Psoas muscle (tissue), 8 donors: ENCODE measurements at regions of chrX and their contacts with region 1.

Region 1: DNA sequence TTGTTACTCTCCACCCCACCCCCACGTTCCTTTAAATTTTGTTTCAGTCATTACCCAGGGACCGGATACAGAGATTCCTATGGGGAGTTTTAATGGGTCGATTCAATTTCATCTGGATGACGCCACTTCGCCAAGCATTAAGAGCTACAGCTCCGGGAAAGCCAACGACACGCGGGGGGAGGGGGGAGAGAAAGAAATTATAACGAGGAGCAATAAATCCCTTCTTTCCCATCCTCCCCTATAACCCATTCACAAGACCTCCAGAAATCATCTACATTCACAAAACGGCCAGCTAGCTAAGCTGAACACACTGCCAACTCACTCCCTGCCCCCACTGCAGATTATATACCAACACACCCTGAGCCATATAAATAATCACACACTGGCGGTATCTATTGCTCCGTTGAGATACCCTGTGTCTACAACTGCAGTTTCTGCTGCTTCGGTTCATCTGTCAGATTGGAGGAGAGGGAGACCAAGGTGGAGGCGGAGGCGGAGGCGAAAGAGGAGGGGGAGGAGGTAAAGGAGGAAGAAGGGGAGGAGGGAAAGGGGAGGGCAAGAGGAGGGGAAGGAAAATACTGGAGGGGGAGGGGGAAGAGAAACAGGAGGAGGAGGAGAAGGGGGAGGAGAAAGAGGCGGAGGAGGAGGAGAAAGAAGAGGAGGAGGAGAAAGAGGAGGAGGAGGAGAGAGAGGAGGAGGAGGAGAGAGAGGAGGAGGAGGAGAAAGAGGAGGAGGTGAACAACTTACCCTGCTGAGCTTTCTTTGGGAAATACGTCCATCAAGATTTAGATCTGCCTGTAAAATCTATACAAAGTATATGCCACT is 113.9 kb upstream of the VAMP7 start:
- DNase-seq: peak; percentile 21 to 52
- ATAC-seq: peak; percentile 75 to 90 (median 86)
- H3K4me3 ChIP-seq: peak overlapping the region; percentile 64
- H3K27ac ChIP-seq: peak overlapping the region; percentile 72
- H3K4me1 ChIP-seq: no peaks in the 10 kb centered on the region
- H3K27me3 ChIP-seq: no peaks in the 10 kb centered on the region
- CTCF ChIP-seq: no peak

Region 2: DNA sequence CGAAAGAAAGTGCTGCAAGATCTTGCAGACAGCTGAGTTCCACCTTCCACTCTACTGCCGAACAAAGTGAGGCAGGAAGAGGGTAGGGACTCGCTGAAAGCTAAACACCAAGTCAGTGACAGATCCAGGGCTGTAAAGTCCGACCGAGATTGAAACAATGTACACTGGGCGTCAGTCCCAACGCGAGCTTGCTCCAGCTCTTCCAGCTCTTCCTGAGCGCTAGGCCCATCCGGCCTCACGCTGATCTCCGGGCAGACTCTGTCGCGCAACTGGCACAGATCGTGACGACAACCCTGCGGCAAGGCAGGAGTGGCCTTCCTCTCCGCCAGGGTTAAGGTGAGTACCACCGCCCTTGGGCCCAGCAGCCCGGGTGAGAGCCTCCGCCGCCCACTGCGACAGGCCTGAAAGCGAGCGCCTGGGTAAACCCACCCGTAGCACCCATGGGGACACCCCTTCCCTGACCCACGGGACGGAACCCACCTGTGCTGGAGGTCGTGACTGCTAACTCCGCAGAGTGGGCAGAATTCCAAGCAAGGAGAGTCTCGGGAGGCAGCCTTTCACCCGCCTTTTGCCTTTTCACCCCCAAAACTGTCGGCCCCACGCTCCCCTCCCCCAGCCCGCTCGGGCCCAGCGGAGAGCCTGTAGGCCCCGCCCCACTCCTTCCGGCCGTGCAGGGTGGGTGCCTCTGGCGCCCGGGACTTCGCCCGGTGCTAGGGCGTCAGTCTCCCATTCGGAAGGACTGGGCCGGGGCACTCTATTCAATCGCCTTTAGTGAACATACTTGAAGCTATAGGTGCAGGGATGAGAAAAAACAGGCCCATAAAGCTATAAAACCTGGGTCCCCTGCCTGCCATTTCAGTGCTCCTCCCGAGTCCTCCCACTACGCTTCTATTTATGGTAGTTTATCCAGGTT is 154.7 kb before region 1 on chrX and contains the start of gene TMLHE:
- intact Hi-C with region 1: loop called in 1 of 2 experiments (anchors 5 kb)
- DNase-seq: peak; percentile 73 to 81
- ATAC-seq: peak; percentile 93 to 97 (median 96)
- H3K4me3 ChIP-seq: peak within 1 kb of the TSS; percentile 75
- H3K27ac ChIP-seq: peak within 1 kb of the TSS; percentile 90
- H3K4me1 ChIP-seq: no peaks in the 10 kb centered on the region
- H3K27me3 ChIP-seq: no peaks in the 10 kb centered on the region
- CTCF ChIP-seq: no peak
- total RNA-seq, gene TMLHE: 21.1 to 36.9 (median 30.1) TPM

Region 3: GRCh38 chrX:155637714-155638113 is 129.5 kb before region 1 on chrX:
- intact Hi-C with region 1: no loop called
- DNase-seq: no peak
- ATAC-seq: no peak
- H3K4me3 ChIP-seq: no peak overlapping the region
- H3K27ac ChIP-seq: no peak overlapping the region
- H3K4me1 ChIP-seq: no peaks in the 10 kb centered on the region
- H3K27me3 ChIP-seq: no peaks in the 10 kb centered on the region
- CTCF ChIP-seq: no peak

Region 4: GRCh38 chrX:155718972-155719586 is 48.2 kb before region 1 on chrX:
- intact Hi-C with region 1: loop called in 1 of 2 experiments (anchors 5 kb)
- DNase-seq: no peak
- ATAC-seq: peak; percentile 87 to 99 (median 93)
- H3K4me3 ChIP-seq: peak overlapping the region; percentile 51
- H3K27ac ChIP-seq: peak overlapping the region; percentile 64
- H3K4me1 ChIP-seq: no peaks in the 10 kb centered on the region
- H3K27me3 ChIP-seq: no peaks in the 10 kb centered on the region
- CTCF ChIP-seq: no peak